Breast epithelium (tissue), 4 donors: ENCODE measurements at regions of chr3 and their contacts with region 1.

Region 1: GRCh38 chr3:69861556-69861955 is 122.3 kb downstream of the MITF start:
- DNase-seq: no peak
- H3K4me3 ChIP-seq: no peak overlapping the region
- H3K27ac ChIP-seq: no peak overlapping the region
- H3K4me1 ChIP-seq: no peaks in the 10 kb centered on the region
- H3K27me3 ChIP-seq: no peaks in the 10 kb centered on the region
- CTCF ChIP-seq: no peak
- POLR2A ChIP-seq: no peak

Region 2: GRCh38 chr3:68620211-68620610 is 1241.3 kb before region 1 on chr3:
- intact Hi-C with region 1: no loop called
- DNase-seq: no peak
- H3K4me3 ChIP-seq: no peak overlapping the region
- H3K27ac ChIP-seq: no peak overlapping the region
- H3K4me1 ChIP-seq: no peaks in the 10 kb centered on the region
- H3K27me3 ChIP-seq: no peaks in the 10 kb centered on the region
- CTCF ChIP-seq: no peak
- POLR2A ChIP-seq: no peak

Region 3: GRCh38 chr3:69803681-69804270 is 57.8 kb before region 1 on chr3:
- intact Hi-C with region 1: loop called (anchors 2 kb)
- DNase-seq: no peak
- H3K4me3 ChIP-seq: no peak overlapping the region
- H3K27ac ChIP-seq: no peak overlapping the region
- H3K4me1 ChIP-seq: no peaks in the 10 kb centered on the region
- H3K27me3 ChIP-seq: no peaks in the 10 kb centered on the region
- CTCF ChIP-seq: no peak
- POLR2A ChIP-seq: no peak